ENCODE measurements at regions of chr6 and their contacts with region 1.

Region 1: DNA sequence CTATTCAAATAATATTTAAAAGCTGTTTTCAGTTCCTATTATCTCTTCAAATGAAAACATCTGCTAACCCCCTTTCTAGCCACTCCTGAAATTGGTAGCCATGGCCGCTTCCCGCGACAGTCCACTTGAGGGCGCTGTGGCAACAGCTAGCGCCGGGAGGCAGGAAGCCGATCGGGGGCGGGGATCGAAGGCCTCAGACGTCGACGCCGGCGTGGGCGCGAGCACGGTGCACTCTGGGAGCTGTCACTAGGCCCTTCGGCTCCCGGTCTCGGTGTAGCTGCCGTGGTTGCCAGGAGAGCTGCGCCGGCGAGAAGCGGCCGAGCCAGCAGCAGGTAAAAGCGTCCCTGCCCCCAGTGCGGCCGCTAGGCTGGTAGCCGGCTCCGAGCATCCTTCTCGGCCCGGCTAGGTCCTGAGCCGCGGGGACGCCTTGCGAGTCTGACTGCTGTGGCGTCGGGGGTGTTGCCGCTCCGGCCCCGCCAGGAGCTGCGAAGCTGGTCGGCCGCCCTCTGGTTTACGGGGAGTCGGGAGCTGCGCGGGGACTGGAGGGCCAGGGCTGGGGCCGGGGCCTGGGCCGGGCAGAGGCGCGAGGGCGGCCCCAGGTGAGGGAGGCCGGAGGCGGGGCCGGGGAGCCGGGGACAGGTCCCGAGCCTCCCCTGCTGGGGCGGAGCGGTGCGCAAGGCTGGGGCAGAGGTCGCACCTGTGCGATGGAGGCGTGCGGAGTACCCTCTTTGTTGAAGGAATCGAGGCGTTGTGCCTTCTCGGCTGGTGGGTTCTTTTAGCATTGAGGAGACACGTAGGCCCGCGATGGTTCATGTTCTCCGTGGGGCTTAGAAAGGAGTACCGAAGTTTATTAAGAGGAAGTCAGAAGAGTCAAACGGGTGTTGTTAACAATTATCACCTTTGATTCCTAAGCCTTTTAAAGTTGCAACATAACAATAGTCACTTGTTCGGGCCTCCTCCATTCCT is at the start of gene DOP1A:
- DNase-seq: peak; percentile 92 to 98 (median 97)
- ATAC-seq: peak; percentile 86
- H3K4me3 ChIP-seq: peak within 1 kb of the TSS; percentile 78 to 82
- H3K4me3 Mint-ChIP-seq: peak within 1 kb of the TSS; percentile 95
- H3K27ac ChIP-seq: peak within 1 kb of the TSS; percentile 87 to 91
- H3K27ac Mint-ChIP-seq: peak within 1 kb of the TSS; percentile 97
- H3K4me1 ChIP-seq: peaks cover 23% of the 10 kb centered on the region
- H3K4me1 Mint-ChIP-seq: peaks cover 58% of the 10 kb centered on the region
- H3K27me3 ChIP-seq: no peaks in the 10 kb centered on the region
- H3K27me3 Mint-ChIP-seq: no peaks in the 10 kb centered on the region
- CTCF ChIP-seq: peak; percentile 91
- total RNA-seq, gene DOP1A: 12.1 to 12.3 TPM

Region 2: GRCh38 chr6:83083476-83083875 is 15.7 kb after region 1 on chr6:
- CTCF ChIA-PET with region 1: interaction called, 26 read pairs
- POLR2A ChIA-PET with region 1: no interaction called
- intact Hi-C with region 1: no loop called
- DNase-seq: no peak
- ATAC-seq: no peak
- H3K4me3 ChIP-seq: no peak overlapping the region
- H3K4me3 Mint-ChIP-seq: no peak overlapping the region
- H3K27ac ChIP-seq: no peak overlapping the region
- H3K27ac Mint-ChIP-seq: no peak overlapping the region
- H3K4me1 ChIP-seq: peaks cover 7% of the 10 kb centered on the region
- H3K4me1 Mint-ChIP-seq: peaks cover 35% of the 10 kb centered on the region
- H3K27me3 ChIP-seq: no peaks in the 10 kb centered on the region
- H3K27me3 Mint-ChIP-seq: no peaks in the 10 kb centered on the region
- CTCF ChIP-seq: no peak

Region 3: DNA sequence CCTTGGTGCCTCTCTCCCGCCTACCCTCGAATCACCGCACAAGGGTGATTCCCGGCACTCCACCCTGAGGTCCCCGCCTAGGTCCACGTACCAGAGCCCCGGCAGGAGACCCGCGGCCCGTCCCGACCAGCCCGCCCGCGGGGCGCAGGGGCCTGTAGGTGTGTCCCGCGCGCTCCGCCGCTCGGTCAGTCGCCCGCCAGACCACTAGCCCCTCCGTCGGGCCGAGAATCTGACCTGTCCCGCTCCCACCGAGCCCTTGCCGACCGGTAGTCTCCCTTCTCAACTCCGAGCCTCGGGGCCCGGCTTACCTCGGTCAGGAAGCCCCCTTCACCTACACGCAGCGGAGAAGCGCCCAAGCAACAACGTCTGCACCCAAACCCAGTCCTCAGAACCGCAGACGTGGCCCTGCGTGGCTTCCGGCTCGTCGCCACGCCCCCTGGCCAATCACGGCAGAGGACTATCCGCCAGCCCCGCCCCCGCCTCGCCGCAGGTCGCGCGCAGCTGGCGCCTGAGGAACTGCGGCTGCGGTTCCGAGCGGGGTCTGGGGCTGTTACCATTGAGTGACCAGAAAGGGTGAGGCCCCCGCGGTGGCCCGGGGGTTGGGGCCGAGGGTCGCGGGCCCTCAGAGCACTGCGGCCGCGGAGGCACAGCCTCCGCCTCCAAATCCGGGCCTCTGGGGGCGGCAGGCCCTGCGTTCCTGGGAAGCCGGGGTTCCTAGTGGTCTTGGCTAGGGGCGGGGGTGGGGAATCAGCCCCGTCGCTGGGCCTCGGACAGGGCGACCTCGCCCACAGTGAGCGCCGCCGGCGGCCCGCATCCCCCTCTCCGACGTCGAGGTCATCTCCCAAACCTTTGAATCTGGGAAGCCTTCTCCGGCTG is 125.4 kb after region 1 on chr6 and contains the starts of genes PGM3 and RWDD2A:
- CTCF ChIA-PET with region 1: interaction called, 33 read pairs
- POLR2A ChIA-PET with region 1: interaction called, 4 read pairs
- intact Hi-C with region 1: loop called (anchors 1 kb)
- DNase-seq: peak; percentile 74 to 95 (median 90)
- ATAC-seq: peak; percentile 97
- H3K4me3 ChIP-seq: peak within 1 kb of the TSS; percentile 82 to 84
- H3K4me3 Mint-ChIP-seq: peak within 1 kb of the TSS; percentile 99
- H3K27ac ChIP-seq: peak within 1 kb of the TSS; percentile 51 to 82
- H3K27ac Mint-ChIP-seq: peak within 1 kb of the TSS; percentile 98
- H3K4me1 ChIP-seq: peaks cover 14% of the 10 kb centered on the region
- H3K4me1 Mint-ChIP-seq: peaks cover 53% of the 10 kb centered on the region
- H3K27me3 ChIP-seq: no peaks in the 10 kb centered on the region
- H3K27me3 Mint-ChIP-seq: no peaks in the 10 kb centered on the region
- CTCF ChIP-seq: no peak
- total RNA-seq, gene PGM3: 25.8 to 26.4 TPM
- total RNA-seq, gene RWDD2A: 2.1 to 2.2 TPM

Region 4: DNA sequence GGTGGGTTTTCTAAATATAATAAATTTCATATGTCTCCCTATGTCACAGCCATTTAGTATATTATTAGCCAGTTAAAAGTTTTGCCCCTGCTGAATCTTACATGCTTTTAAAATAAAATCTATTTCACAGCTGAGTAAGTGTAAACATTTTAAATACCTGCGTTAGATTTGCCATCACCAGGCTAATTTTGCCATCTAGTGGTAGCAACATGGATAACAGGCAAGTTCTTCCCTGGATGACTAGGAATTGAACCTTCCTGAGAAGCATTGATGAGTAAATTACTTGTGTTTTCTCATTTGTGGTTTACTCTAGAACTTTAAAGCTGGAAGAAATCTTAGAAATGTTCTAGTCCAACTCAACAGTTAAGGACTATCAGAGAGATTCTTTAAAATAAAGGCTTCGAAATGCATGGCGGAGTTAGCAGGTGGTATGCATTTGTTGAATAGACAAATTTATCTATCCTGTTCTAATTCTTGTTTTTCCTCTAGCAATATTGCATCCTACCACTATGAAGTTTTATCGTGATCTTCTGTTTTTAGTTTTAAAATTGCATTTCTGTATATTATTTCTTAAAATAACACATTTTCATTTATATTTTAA is 447.2 kb after region 1 on chr6:
- CTCF ChIA-PET with region 1: interaction called, 16 read pairs
- POLR2A ChIA-PET with region 1: no interaction called
- intact Hi-C with region 1: loop called (anchors 5 kb)
- DNase-seq: peak in 2 of 9 experiments; percentile 52 to 53
- ATAC-seq: no peak
- H3K4me3 ChIP-seq: no peak overlapping the region
- H3K4me3 Mint-ChIP-seq: no peak overlapping the region
- H3K27ac ChIP-seq: no peak overlapping the region
- H3K27ac Mint-ChIP-seq: no peak overlapping the region
- H3K4me1 ChIP-seq: no peaks in the 10 kb centered on the region
- H3K4me1 Mint-ChIP-seq: peaks cover 11% of the 10 kb centered on the region
- H3K27me3 ChIP-seq: no peaks in the 10 kb centered on the region
- H3K27me3 Mint-ChIP-seq: peaks cover 31% of the 10 kb centered on the region
- CTCF ChIP-seq: peak; percentile 71

Region 5: GRCh38 chr6:84227434-84228197 is 1159.9 kb after region 1 on chr6 and contains the start of gene CEP162:
- CTCF ChIA-PET with region 1: interaction called, 3 read pairs
- POLR2A ChIA-PET with region 1: no interaction called
- intact Hi-C with region 1: loop called (anchors 1 to 2 kb)
- DNase-seq: peak; percentile 77 to 93 (median 90)
- ATAC-seq: peak; percentile 92
- H3K4me3 ChIP-seq: peak within 1 kb of the TSS; percentile 91 to 92
- H3K4me3 Mint-ChIP-seq: peak within 1 kb of the TSS; percentile 100
- H3K27ac ChIP-seq: peak within 1 kb of the TSS; percentile 58 to 72
- H3K27ac Mint-ChIP-seq: peak within 1 kb of the TSS; percentile 95
- H3K4me1 ChIP-seq: peaks cover 5% of the 10 kb centered on the region
- H3K4me1 Mint-ChIP-seq: peaks cover 23% of the 10 kb centered on the region
- H3K27me3 ChIP-seq: no peaks in the 10 kb centered on the region
- H3K27me3 Mint-ChIP-seq: peaks cover 10% of the 10 kb centered on the region
- CTCF ChIP-seq: peak; percentile 88
- total RNA-seq, gene CEP162: 2.0 to 2.6 TPM

Measured in CD8-positive, alpha-beta T cell (primary cell).